ENCODE measurements at regions of chr19 and their contacts with region 1.

Region 1: GRCh38 chr19:17069218-17069617 is 6.0 kb downstream of the HAUS8 start:
- DNase-seq: no peak
- CTCF ChIP-seq: no peak

Region 2: DNA sequence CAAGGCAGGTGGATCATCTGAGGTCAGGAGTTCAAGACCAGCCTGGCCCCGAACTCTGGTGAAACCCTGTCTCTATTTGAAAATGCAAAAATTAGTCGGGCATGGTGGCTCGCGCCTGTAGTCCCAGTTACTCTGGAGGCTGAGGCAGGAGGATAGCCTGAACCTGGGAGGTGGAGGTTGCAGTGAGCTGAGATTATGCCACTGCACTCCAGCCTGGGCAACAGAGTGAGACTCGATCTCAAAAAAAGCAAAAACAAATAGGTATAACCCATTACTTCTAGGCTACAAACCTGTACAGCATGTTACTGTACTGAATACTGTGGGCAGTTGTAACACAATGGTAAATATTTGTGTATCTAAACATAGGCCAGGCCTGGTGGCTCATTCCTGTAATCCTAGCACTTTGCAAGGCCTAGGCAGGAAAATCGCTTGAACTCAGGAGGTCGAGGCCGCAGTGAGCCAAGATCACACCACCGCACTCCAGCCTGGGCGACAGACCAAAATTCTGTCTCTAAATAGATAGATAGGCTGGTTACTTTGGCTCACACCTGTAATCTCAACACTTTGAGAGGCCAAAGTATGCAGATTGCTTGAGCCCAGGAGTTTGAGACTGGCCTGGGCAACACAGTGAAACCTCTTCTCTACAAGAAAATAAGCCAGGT is 69.8 kb after region 1 on chr19:
- in situ Hi-C with region 1: no loop called
- DNase-seq: no peak
- CTCF ChIP-seq: no peak

Region 3: DNA sequence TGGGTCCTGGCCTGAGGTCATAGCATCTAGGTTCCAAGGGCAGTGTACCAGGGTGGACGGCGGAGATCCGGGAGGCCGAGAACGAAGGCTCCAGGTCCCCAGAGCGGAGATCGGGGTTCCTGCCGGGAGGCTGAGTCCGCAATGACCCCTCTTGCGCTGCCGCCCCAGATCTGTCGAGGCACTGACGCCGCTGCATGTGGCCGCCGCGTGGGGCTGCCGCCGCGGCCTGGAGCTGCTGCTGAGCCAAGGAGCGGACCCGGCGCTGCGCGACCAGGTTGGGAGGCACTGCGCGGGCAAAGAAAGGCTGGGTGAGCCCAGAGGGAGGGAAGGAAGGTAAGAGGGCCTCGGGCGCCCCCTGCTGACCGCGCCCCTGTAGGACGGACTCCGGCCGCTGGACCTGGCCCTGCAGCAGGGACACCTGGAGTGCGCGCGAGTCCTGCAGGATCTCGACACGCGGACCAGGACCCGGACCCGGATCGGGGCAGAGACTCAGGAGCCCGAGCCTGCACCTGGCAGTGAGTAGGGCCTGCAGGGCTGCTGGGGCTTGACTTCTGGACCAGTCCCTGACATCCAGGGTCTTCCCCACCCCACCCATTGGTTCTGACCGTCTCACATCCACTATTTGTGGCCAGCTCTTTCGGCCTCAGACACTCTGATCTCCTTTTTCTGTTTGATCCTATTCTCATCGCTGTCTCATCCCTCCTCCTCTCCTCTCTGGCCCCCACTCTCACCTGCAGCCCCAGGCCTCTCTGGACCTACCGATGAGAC is 213.5 kb after region 1 on chr19:
- in situ Hi-C with region 1: loop called (anchors 10 kb)
- DNase-seq: peak; percentile 93
- CTCF ChIP-seq: peak; percentile 92